Activated CD8-positive, alpha-beta T cell treated with anti-CD3 and anti-CD28 coated beads for 36 hours (primary cell): ENCODE measurements at regions of chr1 and their contacts with region 1.

Region 1: GRCh38 chr1:226201029-226201593 is 14.6 kb upstream of the ACBD3 start:
- DNase-seq: peak; percentile 23
- ATAC-seq: no peak
- H3K4me3 Mint-ChIP-seq: no peak overlapping the region
- H3K27ac Mint-ChIP-seq: no peak overlapping the region
- H3K4me1 Mint-ChIP-seq: peaks cover 2% of the 10 kb centered on the region
- H3K27me3 Mint-ChIP-seq: peaks cover 4% of the 10 kb centered on the region
- CTCF ChIP-seq: no peak

Region 2: DNA sequence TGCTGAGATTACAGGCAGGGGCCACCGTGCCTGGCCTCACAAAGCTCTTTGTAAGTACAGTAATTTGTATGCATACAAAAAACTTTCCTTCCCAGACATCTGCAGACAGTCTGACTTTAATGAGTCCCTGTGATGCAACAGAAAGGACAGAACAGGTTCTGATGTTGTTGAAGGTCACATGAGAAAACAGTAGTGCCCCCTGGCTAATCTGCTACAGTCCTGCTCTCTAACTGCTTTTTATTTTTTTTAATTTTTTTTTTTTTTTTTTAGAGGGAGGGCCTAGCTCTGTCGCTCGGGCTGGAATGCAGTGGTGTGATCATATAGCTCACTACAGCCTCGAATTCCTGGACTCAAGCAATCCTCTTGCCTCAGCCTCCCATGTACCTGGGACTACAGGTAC is 51.3 kb before region 1 on chr1:
- CTCF ChIA-PET with region 1: interaction called, 11 read pairs
- POLR2A ChIA-PET with region 1: no interaction called
- intact Hi-C with region 1: no loop called
- DNase-seq: no peak
- ATAC-seq: peak; percentile 10
- H3K4me3 Mint-ChIP-seq: no peak overlapping the region
- H3K27ac Mint-ChIP-seq: no peak overlapping the region
- H3K4me1 Mint-ChIP-seq: no peaks in the 10 kb centered on the region
- H3K27me3 Mint-ChIP-seq: no peaks in the 10 kb centered on the region
- CTCF ChIP-seq: no peak

Region 3: GRCh38 chr1:226211181-226211821 is 10.2 kb after region 1 on chr1:
- CTCF ChIA-PET with region 1: interaction called, 11 read pairs
- POLR2A ChIA-PET with region 1: no interaction called
- intact Hi-C with region 1: no loop called
- DNase-seq: no peak
- ATAC-seq: no peak
- H3K4me3 Mint-ChIP-seq: no peak overlapping the region
- H3K27ac Mint-ChIP-seq: no peak overlapping the region
- H3K4me1 Mint-ChIP-seq: no peaks in the 10 kb centered on the region
- H3K27me3 Mint-ChIP-seq: no peaks in the 10 kb centered on the region
- CTCF ChIP-seq: no peak

Region 4: DNA sequence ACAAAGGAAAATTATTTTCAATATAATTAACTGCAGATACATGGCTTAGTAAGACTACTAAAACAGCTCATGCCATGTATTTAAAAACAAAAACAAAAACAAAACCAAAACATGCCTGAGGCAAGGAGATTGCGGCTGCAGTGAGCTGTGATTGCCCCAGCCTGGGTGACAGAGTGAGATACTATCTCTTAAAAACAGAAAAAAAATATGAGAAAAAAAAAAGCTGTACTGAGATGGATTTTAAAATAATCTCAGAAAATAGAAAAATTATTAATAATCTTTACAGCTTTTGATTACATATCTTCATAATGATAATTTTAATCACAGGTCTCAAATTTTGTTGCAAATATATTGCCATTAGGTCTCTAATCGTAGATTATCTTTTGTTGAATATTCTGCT is 131.8 kb after region 1 on chr1:
- CTCF ChIA-PET with region 1: interaction called, 16 read pairs
- POLR2A ChIA-PET with region 1: no interaction called
- intact Hi-C with region 1: no loop called
- DNase-seq: no peak
- ATAC-seq: no peak
- H3K4me3 Mint-ChIP-seq: peak overlapping the region; percentile 37
- H3K27ac Mint-ChIP-seq: no peak overlapping the region
- H3K4me1 Mint-ChIP-seq: peaks cover 10% of the 10 kb centered on the region
- H3K27me3 Mint-ChIP-seq: no peaks in the 10 kb centered on the region
- CTCF ChIP-seq: no peak